ENCODE measurements at regions of chr12 and their contacts with region 1.

Region 1: DNA sequence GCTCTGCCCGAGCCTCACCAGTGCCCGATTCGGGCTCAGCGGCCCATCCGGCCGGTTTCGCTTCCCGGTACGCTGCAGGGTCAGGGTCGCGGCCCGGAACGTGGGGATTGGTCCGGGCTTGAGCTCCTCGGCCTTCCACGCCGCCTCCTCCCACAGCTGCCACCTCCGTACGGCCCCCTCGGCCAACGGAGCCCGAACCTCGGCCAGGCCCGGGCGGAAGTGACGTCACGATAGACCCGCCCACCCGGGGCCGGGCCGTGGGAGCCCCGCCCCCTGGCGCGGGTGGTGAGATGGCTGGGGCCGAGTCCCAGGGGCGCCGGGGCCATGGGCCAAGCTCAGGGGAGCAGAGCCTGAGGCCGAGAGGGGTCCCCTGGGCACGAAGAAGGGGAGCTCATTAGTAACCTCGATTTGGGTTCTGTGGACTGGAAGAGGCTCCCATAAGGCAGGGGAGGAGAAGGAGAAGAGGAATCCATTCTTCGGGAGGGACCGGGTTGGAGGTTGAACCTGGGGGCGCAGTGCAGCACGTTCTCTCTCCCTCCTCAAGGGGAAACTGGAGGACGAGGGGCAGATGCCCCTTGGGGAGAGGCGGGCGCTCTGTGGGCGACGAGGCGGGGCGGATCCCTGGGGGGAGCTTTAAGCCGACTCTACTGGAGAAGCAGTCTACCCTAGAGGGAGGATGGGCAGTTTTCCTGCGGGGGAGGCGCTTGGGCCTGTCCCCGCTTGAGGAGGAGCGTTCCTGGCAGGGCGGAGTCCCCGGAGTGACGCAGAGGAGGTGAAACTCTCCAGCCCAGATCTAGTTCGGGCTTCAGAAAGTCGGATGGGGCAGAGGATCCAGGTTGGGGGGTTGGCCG is at the start of gene MLF2:
- DNase-seq: peak; percentile 99
- H3K4me3 ChIP-seq: peak within 1 kb of the TSS; percentile 84
- H3K27ac ChIP-seq: peak within 1 kb of the TSS; percentile 88
- H3K4me1 ChIP-seq: peaks cover 12% of the 10 kb centered on the region
- H3K27me3 ChIP-seq: no peaks in the 10 kb centered on the region
- CTCF ChIP-seq: peak; percentile 90
- total RNA-seq, gene MLF2: 199 to 212 TPM

Region 2: DNA sequence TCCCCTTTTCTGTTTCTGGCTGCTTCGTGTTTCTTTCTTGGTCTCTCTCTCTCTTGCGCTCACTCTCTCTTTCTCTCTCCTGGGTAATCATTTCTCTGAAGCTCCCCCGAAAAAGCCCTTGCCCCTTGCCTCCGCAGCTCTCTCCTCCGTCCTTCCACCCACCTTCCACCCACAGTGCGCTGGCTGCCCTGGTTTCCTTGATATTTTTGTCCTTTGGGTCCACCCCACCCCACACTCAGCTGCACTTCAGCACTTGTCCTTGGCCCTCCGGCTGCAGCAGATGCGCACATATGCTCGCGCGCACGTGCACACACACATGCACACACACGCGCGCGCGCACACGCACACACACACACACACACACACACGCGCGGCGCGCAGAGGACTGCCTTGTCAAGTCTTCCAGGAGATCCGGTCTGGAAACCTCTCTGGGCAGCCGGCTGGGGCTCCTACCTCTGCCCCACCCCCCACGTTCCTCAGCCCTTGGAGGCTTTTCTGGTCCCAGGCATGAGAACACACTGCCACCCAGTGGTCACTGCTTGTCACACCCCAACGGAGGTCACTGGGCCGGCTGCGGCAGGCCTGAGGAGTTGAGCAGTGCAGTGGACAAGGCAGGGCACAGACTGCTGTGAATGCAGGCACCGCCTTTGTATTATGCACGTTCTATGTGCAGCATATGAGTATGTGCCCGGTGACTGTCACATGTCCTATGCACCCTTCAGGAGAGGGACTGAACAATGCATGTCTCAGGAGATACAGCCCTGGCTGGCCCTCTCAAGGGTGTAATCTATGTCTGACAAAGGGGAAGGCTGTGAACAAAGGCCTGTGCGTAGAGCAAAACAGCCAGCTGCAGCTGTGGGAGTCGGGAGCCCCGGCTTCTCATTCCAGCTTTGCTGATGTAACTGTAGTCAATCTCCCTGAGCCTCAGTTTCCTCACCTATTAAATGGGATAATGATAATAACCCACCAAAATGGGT is 25.7 kb after region 1 on chr12:
- intact Hi-C with region 1: loop called (anchors 2 kb)
- DNase-seq: peak; percentile 98
- H3K4me3 ChIP-seq: peak overlapping the region; percentile 37
- H3K27ac ChIP-seq: peak overlapping the region; percentile 13
- H3K4me1 ChIP-seq: no peaks in the 10 kb centered on the region
- H3K27me3 ChIP-seq: peaks cover under 1% of the 10 kb centered on the region
- CTCF ChIP-seq: peak; percentile 91

Region 3: DNA sequence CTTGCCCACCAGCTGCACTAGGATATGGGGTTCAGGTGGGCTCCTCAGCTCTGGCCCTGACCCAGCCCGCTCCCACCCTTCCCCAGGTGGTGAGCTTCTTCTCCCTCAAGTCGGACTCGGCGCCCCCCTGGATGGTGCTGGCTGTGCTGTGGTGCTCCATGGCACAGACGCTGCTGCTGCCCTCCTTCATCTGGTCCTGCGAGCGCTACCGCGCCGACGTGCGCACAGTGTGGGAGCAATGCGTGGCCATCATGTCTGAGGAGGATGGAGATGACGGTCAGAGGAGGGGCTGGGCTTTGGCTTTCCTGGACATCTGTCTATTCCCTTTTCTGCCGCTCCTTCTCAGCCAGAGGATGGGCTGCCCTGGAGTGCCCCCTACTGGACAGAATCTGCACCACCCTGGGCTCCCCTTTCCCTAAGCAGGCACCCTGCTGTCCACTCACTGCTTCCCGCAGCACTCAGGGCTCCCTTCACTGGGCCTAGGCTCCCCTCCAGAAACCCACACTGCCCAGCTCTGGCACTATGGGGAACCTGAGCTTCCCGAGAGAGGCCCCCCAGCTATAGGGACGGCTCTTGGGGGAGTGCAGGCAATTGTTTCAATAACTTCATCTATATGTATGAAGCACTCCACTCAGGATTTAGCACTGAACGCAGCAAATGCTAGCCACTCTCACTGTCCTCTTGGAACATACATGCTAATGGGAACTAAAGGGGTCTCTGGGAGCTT is 72.4 kb after region 1 on chr12:
- intact Hi-C with region 1: loop called (anchors 5 kb)
- DNase-seq: peak; percentile 91
- H3K4me3 ChIP-seq: no peak overlapping the region
- H3K27ac ChIP-seq: no peak overlapping the region
- H3K4me1 ChIP-seq: no peaks in the 10 kb centered on the region
- H3K27me3 ChIP-seq: peaks cover 29% of the 10 kb centered on the region
- CTCF ChIP-seq: peak; percentile 93

Measured in colonic mucosa (tissue), 4 donors.